ENCODE measurements at regions of chr16 and their contacts with region 1.

Region 1: GRCh38 chr16:2720719-2721633 is 952 bp upstream of the PRSS27 start:
- DNase-seq: peak; percentile 87

Region 2: DNA sequence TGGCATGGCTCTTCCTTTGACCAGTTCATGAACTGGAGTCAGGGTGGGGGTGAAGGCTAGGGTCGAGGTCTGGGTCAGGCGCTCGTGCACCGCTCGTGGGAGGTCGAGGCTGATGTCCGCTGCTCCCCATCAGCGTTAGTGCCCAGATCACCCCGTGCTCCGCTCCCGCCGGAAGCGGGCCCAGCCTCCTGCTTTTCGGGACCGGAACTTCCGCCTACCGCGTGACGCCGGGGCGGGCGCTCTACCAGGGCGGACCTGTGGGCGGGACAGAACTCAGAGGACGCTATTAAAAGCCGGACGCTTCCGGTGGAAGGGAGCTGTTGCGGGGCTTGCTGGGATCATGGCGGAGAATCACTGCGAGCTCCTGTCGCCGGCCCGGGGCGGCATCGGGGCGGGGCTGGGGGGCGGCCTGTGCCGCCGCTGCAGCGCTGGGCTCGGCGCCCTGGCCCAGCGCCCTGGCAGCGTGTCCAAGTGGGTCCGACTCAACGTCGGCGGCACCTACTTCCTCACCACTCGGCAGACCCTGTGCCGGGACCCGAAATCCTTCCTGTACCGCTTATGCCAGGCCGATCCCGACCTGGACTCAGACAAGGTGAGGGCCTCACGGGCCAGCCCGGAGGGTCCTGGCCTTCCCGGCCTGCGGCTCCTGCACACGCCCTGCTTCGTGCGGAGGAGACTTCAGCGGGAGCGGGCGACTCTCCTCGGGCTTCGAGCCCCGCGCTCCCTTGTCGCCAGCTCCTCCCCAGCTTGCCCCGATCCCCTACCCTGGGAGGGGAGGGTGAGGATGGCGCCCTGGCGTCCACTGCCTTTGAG is 38.6 kb before region 1 on chr16 and contains the start of gene KCTD5:
- intact Hi-C with region 1: loop called (anchors 5 kb)
- DNase-seq: peak; percentile 98
- total RNA-seq, gene KCTD5: 13.9 TPM

Region 3: GRCh38 chr16:2761472-2761871 is 40.5 kb after region 1 on chr16:
- intact Hi-C with region 1: no loop called
- DNase-seq: no peak

Measured in cardiac septum (tissue), 1 donor.